Activated naive CD4-positive, alpha-beta T cell treated with anti-CD3 and anti-CD28 coated beads, Interleukin-2, amount 10 ng/mL, durations not matched to agents 7 days and 5 days (primary cell): ENCODE measurements at regions of chr10 and their contacts with region 1.

Region 1: GRCh38 chr10:99711129-99711719 is 20.7 kb downstream of the COX15 start:
- DNase-seq: peak; percentile 56
- H3K4me3 Mint-ChIP-seq: no peak overlapping the region
- H3K27ac Mint-ChIP-seq: no peak overlapping the region
- H3K4me1 Mint-ChIP-seq: no peaks in the 10 kb centered on the region
- H3K27me3 Mint-ChIP-seq: no peaks in the 10 kb centered on the region

Region 2: GRCh38 chr10:99394256-99394655 is 317.0 kb before region 1 on chr10:
- CTCF ChIA-PET with region 1: interaction called, 11 read pairs
- DNase-seq: no peak
- H3K4me3 Mint-ChIP-seq: no peak overlapping the region
- H3K27ac Mint-ChIP-seq: no peak overlapping the region
- H3K4me1 Mint-ChIP-seq: peaks cover 14% of the 10 kb centered on the region
- H3K27me3 Mint-ChIP-seq: peaks cover 5% of the 10 kb centered on the region

Region 3: DNA sequence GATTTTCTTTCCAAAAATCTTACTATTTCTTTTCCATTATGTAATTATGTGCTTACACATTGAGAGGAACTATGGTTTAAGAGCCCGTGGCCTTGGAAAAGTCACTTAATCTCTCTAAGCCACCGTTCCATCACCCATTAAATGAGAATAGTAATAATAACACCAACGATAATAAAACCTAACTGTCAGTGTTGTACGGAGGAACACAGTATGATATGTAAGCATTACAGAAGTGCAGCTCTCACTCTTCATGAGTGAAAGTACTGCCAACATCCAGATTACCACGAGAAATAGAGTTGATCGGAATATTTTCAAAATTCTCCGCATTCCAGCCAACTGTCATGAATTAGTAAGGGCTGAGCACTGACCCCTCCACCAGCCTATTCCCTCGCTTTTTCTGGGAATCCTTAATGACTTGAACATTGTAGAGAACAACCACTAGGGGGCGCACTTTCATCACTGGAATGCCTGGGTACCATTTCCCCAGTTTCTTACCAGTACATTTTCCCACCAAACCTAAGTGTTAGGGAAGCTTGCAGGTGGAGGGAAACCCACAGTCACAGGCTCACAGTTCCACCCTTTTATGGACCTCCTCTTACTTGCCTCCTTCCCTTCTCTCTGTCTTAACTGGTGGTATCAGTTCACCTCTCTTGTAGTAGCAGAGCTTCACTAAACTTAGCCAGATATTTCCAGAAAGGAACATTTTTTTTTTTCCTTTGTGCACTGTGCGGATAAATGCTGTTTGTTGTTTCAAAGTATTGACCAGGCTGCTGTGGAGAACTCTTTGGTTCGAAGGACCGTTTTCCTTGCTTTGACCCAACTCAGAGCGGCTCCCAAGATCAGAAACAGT is 150.7 kb before region 1 on chr10:
- CTCF ChIA-PET with region 1: interaction called, 18 read pairs
- DNase-seq: peak; percentile 57
- H3K4me3 Mint-ChIP-seq: no peak overlapping the region
- H3K27ac Mint-ChIP-seq: no peak overlapping the region
- H3K4me1 Mint-ChIP-seq: peaks cover 6% of the 10 kb centered on the region
- H3K27me3 Mint-ChIP-seq: peaks cover 43% of the 10 kb centered on the region

Region 4: DNA sequence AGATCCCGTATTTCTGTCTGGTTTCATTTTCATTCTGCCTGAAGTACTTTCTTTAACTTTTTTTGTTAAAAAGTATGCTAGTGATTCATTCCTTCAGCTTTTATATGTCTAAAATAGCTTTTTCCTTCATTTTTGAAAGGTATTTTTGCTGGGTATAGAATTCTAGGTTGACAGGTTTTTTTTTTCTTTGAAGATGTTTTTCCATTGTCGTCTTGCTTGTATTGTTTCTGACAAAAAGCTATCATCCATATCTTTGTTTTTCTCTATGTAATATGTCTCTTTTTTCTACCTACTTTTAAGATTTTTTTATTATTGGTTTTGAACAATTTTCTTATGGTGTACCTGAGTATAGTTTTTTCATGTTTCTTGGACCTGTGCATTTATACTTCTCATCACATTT is 29.0 kb after region 1 on chr10:
- CTCF ChIA-PET with region 1: no interaction called
- DNase-seq: no peak
- H3K4me3 Mint-ChIP-seq: no peak overlapping the region
- H3K27ac Mint-ChIP-seq: no peak overlapping the region
- H3K4me1 Mint-ChIP-seq: peaks cover 10% of the 10 kb centered on the region
- H3K27me3 Mint-ChIP-seq: no peaks in the 10 kb centered on the region